ENCODE measurements at regions of chr2 and their contacts with region 1.

Region 1: GRCh38 chr2:166516712-166517303 is 22.8 kb upstream of the SCN7A start:
- DNase-seq: peak; percentile 26
- H3K4me3 ChIP-seq: peak overlapping the region in 1 of 2 experiments; percentile 14; a peak in 1 of 4 replicates
- H3K27ac ChIP-seq: no peak overlapping the region
- H3K4me1 ChIP-seq: no peaks in the 10 kb centered on the region
- H3K27me3 ChIP-seq: no peaks in the 10 kb centered on the region
- CTCF ChIP-seq: peak; percentile 79
- EP300 ChIP-seq: no peak
- RAD21 ChIP-seq: peak; percentile 79

Region 2: GRCh38 chr2:166417669-166418068 is 99.1 kb before region 1 on chr2:
- CTCF ChIA-PET with region 1: interaction called, 24 read pairs
- POLR2A ChIA-PET with region 1: no interaction called
- DNase-seq: no peak
- H3K4me3 ChIP-seq: no peak overlapping the region
- H3K27ac ChIP-seq: no peak overlapping the region
- H3K4me1 ChIP-seq: peaks cover 3 to 9% of the 10 kb centered on the region in 2 experiments; a peak in 2 of 4 replicates
- H3K27me3 ChIP-seq: no peaks in the 10 kb centered on the region
- CTCF ChIP-seq: 0 out of 2 replicates have a peak, but pooled peaks have one; percentile 19
- EP300 ChIP-seq: no peak
- RAD21 ChIP-seq: peak; percentile 53

Region 3: DNA sequence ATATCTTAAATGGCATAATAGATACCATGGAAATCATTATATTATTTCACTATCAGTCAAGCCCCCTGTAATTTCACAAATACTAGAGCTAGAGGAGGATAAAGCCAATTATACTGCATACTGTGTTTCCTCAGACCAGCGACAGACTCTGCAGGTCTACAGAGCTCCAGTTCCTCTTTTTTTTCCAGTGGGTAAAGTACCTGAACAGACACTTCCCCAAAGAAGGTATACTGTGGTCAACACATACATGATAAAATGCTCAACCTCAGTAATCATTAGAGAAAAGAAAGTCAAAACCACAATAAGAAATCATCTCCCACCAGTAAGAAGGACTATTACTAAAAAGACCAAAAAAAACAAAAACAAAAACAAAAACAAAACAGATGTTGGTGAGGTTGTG is 67.4 kb before region 1 on chr2:
- CTCF ChIA-PET with region 1: no interaction called
- POLR2A ChIA-PET with region 1: no interaction called
- DNase-seq: no peak
- H3K4me3 ChIP-seq: no peak overlapping the region
- H3K27ac ChIP-seq: no peak overlapping the region
- H3K4me1 ChIP-seq: no peaks in the 10 kb centered on the region
- H3K27me3 ChIP-seq: no peaks in the 10 kb centered on the region
- CTCF ChIP-seq: no peak
- EP300 ChIP-seq: no peak
- RAD21 ChIP-seq: no peak

Region 4: DNA sequence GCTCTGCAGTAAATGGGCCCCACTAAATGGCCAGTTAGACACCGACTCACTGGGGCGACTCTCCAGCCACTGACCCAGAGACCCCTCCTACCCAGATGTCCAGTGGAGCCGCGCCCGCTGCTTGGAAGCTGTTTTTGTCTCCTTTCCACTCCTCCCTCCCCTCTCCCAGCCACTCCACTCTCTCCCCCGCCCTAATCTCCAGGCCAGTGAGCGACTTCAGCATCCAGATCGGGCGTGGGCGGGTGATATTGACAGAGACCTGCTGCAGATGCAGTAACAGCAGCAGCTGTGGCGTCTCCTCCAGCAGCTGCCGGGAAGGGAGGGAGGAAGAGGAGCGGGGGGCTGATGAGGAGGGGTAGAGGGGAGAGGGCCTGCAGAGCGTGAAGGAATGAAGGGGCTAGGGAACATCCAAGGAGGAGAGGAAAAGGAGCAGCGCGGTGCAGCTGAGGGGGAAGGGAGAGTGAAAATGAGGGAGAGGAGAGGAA is 22.6 kb before region 1 on chr2 and contains the start of gene SCN7A:
- CTCF ChIA-PET with region 1: interaction called, 12 read pairs
- POLR2A ChIA-PET with region 1: no interaction called
- DNase-seq: peak; percentile 63
- H3K4me3 ChIP-seq: peak within 1 kb of the TSS; percentile 35 to 46; a peak in 3 of 4 replicates
- H3K27ac ChIP-seq: no peak within 1 kb of the TSS; a peak in 1 of 4 replicates
- H3K4me1 ChIP-seq: peaks cover 0 to 9% of the 10 kb centered on the region in 2 experiments; a peak in 2 of 4 replicates
- H3K27me3 ChIP-seq: no peaks in the 10 kb centered on the region
- CTCF ChIP-seq: no peak
- EP300 ChIP-seq: no peak
- RAD21 ChIP-seq: no peak
- polyA plus RNA-seq, gene SCN7A: 0.02 and 0.05 TPM in 2 replicates